Transverse colon (tissue), 4 donors: ENCODE measurements at regions of chr1 and their contacts with region 1.

Region 1: DNA sequence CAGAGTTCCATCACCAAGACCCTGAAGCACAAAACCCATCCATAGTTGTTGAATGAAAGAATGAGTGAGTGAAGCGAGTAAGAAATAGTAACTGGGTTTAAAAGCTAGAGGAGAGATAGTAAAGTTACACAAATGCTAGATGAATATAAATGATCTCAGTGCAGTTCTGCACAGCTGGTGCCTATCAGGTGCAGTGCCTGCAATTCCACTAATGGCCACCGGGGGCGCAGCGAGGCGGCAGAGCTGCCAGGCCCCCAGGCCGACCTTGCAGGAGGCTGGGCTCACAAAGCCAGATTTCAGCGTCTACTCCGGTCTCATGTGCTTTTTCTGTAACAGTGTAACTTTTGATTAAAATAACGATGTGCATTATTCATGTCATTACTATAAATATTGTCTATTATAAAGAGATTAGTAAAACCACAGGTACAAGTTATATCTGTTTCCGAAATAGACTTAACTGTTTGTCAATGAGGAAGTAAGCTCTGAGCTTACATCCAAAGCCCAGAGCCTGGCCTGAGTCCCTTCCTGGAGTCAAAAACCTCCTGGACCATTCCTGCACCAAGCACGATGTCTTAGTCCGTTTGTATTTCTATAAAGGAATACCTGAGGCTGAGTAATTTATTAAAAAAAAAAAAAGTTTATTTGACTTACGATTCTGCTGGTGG is 477.6 kb downstream of the NPHP4 start:
- DNase-seq: peak; percentile 71
- H3K4me3 ChIP-seq: no peak overlapping the region
- H3K27ac ChIP-seq: peak overlapping the region in 1 of 4 donors; percentile 13
- H3K4me1 ChIP-seq: peaks cover 4 to 9% (median 8%) of the 10 kb centered on the region in 4 donors
- H3K27me3 ChIP-seq: peaks cover 15% of the 10 kb centered on the region
- CTCF ChIP-seq: peak; percentile 91 to 100 (median 100)
- EP300 ChIP-seq: no peak
- POLR2A ChIP-seq: no peak

Region 2: DNA sequence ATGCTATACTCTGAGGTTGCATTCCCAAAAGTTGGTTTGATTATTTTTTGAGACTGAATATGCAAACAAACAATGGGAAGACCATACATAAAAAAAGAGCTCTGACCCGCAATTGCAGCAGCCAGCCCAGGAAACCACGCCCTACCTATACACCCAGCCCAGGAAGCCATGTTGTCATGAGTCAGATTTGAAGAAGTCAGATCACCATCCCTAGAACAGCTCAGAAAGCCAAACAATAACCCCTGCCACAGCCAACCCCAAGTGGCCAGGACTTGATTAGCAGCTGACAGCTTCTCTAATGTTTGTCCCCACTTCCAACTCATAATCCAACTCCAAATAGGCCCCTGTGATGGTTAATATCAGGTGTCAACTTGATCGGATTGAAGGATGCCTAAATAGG is 144.3 kb before region 1 on chr1:
- in situ Hi-C with region 1: no loop called
- intact Hi-C with region 1: no loop called
- DNase-seq: no peak
- H3K4me3 ChIP-seq: no peak overlapping the region
- H3K27ac ChIP-seq: no peak overlapping the region
- H3K4me1 ChIP-seq: no peaks in the 10 kb centered on the region
- H3K27me3 ChIP-seq: no peaks in the 10 kb centered on the region
- CTCF ChIP-seq: no peak
- EP300 ChIP-seq: no peak
- POLR2A ChIP-seq: no peak

Region 3: DNA sequence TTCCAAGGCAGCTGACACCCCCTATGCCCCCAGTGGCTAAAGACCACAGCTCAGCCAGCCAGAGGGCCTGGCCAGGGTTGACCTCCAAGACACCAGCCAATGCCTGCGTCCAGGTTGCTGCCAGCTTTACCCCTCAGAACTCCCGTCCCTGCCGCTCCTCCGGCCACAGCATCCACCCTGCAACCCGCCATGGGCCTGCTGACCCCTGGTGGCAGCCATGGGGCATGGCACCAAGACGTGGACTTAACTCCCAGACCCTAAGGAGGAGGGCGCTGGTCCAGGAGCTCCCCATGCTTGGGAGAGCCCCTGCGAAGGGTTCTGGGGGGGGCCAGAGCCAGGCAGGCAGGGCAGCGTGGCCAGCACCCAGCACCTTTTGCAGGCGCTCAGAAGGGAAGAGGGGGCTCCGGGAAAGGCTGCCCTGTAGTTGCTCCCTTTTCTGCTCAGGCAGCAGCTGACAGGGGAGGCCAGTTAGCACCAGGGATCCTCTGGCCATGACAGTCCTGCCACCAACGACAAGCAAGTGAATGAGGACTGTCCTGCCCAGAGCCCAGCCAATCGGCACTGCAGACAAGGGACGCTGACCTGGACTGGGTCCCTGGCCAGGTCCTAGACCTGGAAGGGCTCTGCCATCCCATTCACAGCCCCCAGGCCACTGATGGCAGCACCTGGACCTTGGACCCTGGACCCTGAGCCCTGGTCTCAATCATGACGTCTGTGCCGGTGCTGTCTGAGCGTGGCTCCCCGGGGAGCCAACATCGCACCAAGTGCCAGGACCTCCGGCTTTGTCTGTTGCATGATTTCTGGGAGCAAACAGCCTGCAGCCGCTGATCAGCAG is 231.3 kb after region 1 on chr1:
- in situ Hi-C with region 1: loop called in 2 of 4 experiments (anchors 10 to 25 kb)
- intact Hi-C with region 1: loop called (anchors 10 kb)
- DNase-seq: peak; percentile 54
- H3K4me3 ChIP-seq: no peak overlapping the region
- H3K27ac ChIP-seq: no peak overlapping the region
- H3K4me1 ChIP-seq: no peaks in the 10 kb centered on the region
- H3K27me3 ChIP-seq: peaks cover 46% of the 10 kb centered on the region
- CTCF ChIP-seq: peak; percentile 82 to 94 (median 92)
- EP300 ChIP-seq: no peak
- POLR2A ChIP-seq: no peak

Region 4: DNA sequence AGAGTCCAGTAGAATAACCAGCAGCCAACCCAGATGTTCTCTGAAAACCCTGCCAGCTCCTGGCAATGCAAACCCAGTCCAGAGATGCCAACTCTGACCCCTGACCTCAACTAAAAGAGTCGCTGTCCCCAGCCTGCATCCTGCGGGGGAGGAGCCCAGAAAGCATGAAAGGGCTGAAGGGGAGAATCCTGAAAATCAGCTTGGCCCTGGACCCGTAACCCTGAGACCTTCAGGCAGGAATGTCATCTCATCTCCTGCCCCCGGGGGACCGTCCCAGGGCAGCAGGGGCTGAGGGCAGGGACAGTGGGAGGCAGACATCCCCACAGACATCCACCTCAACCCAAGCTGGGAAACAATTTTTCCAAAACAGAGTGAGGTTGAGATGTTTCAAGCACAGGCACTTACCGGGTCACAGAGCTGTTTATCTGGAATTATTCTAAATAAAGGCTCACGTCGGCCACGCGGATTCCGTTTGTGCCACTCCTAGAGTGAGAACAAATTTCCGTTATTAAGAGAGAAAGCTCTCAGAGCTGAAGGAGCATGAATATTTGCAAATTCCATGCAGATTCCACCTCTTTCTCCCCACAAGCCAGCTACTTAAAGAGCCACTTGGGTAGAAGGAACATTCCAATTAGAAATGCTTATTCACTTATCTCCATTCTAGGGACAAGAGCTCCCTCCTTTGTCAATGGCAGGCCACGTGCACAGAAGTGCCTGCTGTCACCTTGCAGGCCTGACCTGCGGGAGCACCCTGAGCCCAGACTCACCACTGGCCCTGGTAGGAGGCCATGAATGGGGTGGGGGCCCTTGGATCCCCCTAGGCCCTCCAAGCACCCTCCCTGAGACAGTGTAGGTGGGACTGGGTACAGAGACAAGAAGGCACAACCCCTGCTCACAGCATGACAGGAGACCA is 237.4 kb after region 1 on chr1:
- in situ Hi-C with region 1: loop called in 2 of 4 experiments (anchors 10 to 25 kb)
- intact Hi-C with region 1: loop called (anchors 10 kb)
- DNase-seq: no peak
- H3K4me3 ChIP-seq: no peak overlapping the region
- H3K27ac ChIP-seq: no peak overlapping the region
- H3K4me1 ChIP-seq: no peaks in the 10 kb centered on the region
- H3K27me3 ChIP-seq: peaks cover 13% of the 10 kb centered on the region
- CTCF ChIP-seq: no peak
- EP300 ChIP-seq: no peak
- POLR2A ChIP-seq: no peak

Region 5: DNA sequence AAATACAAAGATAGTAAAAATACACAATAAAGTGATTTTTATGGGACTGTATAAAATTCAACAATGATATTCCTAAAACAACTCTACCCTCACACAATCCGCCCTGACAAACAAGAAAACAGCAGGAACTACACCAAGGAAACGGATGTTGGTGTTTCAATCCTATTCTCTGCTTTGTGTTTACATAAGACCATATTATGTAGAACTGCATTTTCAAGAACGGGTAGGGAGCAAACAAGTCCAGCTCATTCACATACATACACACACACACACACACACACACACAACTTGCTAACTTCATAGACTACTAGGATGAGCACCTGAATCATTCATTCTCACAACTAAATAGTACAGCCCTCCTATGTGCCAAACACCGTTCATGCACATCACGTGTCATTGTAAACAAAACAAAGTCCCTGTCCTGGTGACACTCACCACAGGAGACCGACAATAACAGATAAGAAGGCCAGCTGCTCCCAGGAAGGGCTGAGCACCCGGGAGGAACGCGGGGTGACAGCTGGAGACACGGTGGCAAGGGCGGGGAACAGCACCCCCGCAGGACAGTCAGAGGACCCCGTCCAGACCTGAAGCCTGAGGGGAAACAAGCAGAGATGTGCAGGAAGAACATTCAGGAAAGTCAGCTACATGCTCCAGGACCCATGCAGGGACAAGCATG is 434.6 kb after region 1 on chr1:
- in situ Hi-C with region 1: loop called in 3 of 4 experiments (anchors 25 kb)
- intact Hi-C with region 1: no loop called
- DNase-seq: no peak
- H3K4me3 ChIP-seq: no peak overlapping the region
- H3K27ac ChIP-seq: no peak overlapping the region
- H3K4me1 ChIP-seq: peaks cover 0 to 4% (median 2%) of the 10 kb centered on the region in 4 donors
- H3K27me3 ChIP-seq: no peaks in the 10 kb centered on the region
- CTCF ChIP-seq: no peak
- EP300 ChIP-seq: no peak
- POLR2A ChIP-seq: no peak

Region 6: DNA sequence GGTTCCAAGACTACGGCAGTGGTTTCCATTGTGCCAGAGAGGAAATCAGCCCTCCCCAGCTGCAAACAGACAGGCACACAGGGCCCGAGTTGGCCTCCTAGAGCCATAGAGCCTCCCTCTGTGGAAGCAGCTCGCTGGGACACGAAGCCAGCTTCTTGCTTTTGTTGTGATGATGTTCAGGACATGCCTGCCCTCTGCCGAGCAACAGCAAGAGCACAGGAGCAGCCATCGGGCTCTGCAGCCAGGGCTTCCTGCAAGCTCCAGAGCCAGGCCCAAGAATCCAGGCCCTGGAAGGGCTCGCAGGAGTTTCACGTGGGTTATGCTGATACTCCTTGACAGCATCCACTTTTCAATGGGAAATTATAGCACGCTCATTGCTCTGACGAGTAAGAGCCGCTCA is 459.1 kb after region 1 on chr1:
- in situ Hi-C with region 1: loop called in 2 of 4 experiments (anchors 25 kb)
- intact Hi-C with region 1: no loop called
- DNase-seq: no peak
- H3K4me3 ChIP-seq: no peak overlapping the region
- H3K27ac ChIP-seq: no peak overlapping the region
- H3K4me1 ChIP-seq: peaks cover 0 to 8% (median 4%) of the 10 kb centered on the region in 4 donors
- H3K27me3 ChIP-seq: no peaks in the 10 kb centered on the region
- CTCF ChIP-seq: no peak
- EP300 ChIP-seq: no peak
- POLR2A ChIP-seq: no peak